ENCODE measurements at regions of chr19 and their contacts with region 1.

Region 1: DNA sequence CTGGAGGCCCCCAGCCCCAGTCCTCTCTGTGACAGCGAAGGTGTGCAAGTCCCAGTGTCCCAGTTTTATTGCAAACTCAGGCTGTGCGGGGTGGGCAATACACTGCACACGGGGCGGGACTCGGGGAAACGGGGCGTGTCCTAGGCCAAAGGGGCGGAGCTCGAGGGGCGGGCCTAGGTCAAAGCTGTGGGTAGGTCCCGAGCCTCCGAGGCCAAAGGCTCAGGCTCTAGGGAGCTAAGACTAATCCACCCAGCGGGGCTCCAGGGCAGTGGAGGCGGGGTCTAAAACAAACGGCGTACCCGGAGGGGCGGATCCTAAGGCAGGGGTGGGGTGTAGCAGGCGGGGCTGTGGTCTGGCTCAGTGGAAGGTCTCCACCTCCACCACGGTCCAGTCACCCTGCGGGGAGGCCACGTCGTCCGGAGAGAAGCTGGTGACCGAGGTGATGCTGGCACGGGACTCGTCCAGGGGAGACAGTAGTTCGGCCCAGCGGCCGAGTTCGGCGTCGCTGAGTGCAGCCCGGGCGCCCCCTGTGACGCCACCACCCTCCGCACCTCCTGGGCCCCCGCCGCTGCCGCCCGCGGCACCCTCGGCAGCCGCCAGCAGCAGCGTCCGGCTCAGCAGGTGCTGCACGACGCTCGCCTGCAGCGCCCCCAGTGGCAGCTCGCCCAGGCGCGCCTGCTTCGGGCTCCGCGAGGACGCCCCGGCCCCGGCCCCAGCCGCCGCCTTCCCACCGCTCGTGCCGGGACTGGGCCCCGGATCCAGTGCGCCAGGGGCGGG is 5.3 kb downstream of the PRR36 start:
- DNase-seq: peak; percentile 75
- H3K4me3 Mint-ChIP-seq: peak overlapping the region; percentile 61
- H3K27ac Mint-ChIP-seq: no peak overlapping the region
- H3K4me1 Mint-ChIP-seq: peaks cover 21% of the 10 kb centered on the region
- H3K27me3 Mint-ChIP-seq: peaks cover 44% of the 10 kb centered on the region

Region 2: GRCh38 chr19:7460562-7460966 is 408.3 kb before region 1 on chr19:
- intact Hi-C with region 1: no loop called
- DNase-seq: no peak
- H3K4me3 Mint-ChIP-seq: no peak overlapping the region
- H3K27ac Mint-ChIP-seq: no peak overlapping the region
- H3K4me1 Mint-ChIP-seq: no peaks in the 10 kb centered on the region
- H3K27me3 Mint-ChIP-seq: no peaks in the 10 kb centered on the region

Region 3: GRCh38 chr19:7903244-7904073 is 34.6 kb after region 1 on chr19 and contains the start of gene MAP2K7:
- intact Hi-C with region 1: loop called (anchors 1 kb)
- DNase-seq: peak; percentile 100
- H3K4me3 Mint-ChIP-seq: peak within 1 kb of the TSS; percentile 90
- H3K27ac Mint-ChIP-seq: peak within 1 kb of the TSS; percentile 94
- H3K4me1 Mint-ChIP-seq: peaks cover 29% of the 10 kb centered on the region
- H3K27me3 Mint-ChIP-seq: peaks cover 2% of the 10 kb centered on the region
- total RNA-seq, gene MAP2K7: 47.6 and 51.9 TPM in 2 replicates

Region 4: DNA sequence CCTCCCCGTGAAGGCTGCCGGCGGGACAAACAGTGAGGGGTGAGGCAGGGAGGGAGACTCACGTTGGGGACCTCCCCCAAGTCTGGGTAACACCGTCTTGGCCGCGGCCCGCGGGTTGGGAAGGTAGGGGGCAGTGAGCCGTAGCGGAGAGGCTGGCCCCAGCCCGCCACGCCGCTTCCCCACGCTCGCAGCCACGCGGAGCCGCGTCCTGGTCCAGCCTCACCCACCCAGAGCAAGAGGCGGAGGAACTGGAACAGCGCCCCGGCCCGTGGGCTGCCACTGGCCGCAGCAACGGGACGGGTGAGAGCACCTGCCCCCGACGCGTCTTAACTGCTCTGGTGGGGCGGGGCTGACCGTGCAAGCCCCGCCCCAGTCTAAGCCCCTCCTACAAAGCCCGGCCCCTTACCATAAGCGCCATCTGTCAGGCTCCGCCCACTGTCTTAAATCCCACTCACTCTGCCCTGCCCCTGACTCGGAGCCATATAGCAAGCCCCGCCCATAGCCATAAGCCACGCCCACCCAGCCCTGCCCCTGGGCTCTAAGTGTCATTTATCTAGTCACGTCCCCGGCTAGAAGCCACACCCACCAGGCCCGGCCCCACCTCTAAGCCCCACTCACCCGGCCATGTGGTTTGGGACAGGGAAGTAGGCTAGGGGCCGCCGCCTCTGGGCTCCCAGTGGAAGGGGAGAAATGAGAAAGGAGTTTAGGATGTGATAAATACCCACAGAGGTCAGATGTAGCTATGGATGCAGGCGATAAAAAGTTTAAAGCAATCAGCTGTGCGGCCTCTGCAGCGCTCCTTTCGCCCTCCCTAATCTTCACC is 181.6 kb after region 1 on chr19:
- intact Hi-C with region 1: loop called (anchors 1 kb)
- DNase-seq: peak; percentile 73
- H3K4me3 Mint-ChIP-seq: peak overlapping the region; percentile 49
- H3K27ac Mint-ChIP-seq: peak overlapping the region; percentile 52
- H3K4me1 Mint-ChIP-seq: peaks cover 27% of the 10 kb centered on the region
- H3K27me3 Mint-ChIP-seq: peaks cover 13% of the 10 kb centered on the region

Measured in activated T-helper 1 cell treated with anti-CD3 and anti-CD28 coated beads, Interleukin-12 subunit alpha, Interleukin-12 subunit beta, Interleukin-2, Interleukin-4 antibody, amounts not matched to agents 30 ng/mL and 10 ng/mL and 1 ng/mL, durations not matched to agents 14 hours and 24 hours and 36 hours (primary cell).